GM18951 (cell line): ENCODE measurements at regions of chr17 and their contacts with region 1.

Region 1: GRCh38 chr17:47889734-47890529 is 6.1 kb upstream of the SP2 start:
- POLR2A ChIP-seq: no peak

Region 2: DNA sequence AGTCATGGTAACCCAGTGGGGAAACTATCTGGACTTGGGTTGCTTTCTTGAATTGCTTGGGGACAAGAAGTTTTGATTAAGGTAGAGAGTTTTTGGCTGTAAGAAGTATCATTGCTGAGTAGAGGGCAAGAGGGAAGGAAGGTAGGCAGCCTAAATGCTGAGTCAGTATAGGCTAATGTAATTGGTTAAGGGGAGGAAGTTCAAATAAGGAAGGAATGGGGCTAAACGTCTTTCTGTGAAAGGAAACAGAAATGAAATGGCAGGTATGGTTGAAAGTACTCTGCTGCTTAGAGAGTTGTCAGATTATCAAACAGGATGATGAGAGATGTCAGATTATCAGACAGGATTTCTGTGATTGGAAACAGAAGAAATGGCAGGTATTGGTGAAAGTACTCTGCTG is 219.9 kb before region 1 on chr17:
- in situ Hi-C with region 1: no loop called
- POLR2A ChIP-seq: no peak

Region 3: DNA sequence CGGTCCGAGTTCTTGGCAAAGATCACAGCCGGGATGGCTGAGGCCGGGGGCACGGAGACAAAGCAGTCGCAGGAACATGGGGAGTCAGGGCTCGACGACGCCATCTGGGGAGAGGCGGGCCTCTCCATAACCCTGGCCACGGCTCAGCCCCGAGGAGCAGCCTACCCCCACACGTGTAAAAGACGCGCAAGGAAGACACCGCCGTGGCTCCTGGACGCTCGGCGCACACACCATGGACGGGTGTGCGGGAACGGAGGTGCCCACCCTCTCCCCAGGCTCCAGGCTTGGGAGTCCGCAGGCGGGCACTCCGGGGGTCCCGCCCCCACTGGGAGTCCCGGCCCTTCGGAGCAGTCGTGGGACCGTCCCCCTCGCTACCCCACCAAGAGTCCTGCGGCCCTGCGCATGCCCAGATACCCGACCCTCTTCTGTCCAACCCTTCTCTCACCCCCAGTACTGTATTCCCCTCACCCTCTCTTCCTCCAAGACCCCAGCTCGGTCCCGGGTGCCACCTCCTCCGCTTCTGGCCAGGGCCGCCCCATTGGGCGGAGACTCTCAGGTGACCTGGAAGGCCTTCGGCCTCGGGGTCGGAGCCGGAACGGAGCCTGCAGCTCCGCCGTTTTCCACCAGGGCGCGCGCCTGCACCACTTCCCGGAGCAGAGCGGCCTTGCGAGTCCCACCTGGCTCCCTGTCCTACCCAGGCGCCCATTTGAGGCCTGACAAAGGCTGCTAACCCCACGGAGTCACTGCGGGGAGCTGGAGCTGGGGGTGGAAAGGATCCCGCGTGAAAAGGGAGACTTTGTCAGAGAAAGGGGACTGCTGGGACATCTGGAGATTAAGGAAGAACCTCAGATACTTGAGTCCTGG is 49.0 kb before region 1 on chr17 and contains the start of gene SCRN2:
- in situ Hi-C with region 1: loop called (anchors 5 kb)
- POLR2A ChIP-seq: peak; percentile 56